CD8-positive, alpha-beta T cell (primary cell): ENCODE measurements at regions of chr1 and their contacts with region 1.

Region 1: GRCh38 chr1:32817159-32817814 is at the starts of genes S100PBP and YARS1:
- DNase-seq: peak; percentile 98 to 100 (median 100)
- ATAC-seq: peak; percentile 95
- H3K4me3 ChIP-seq: peak within 1 kb of the TSS; percentile 86 to 98
- H3K4me3 Mint-ChIP-seq: peak within 1 kb of the TSS; percentile 96
- H3K27ac ChIP-seq: peak within 1 kb of the TSS; percentile 76 to 84
- H3K27ac Mint-ChIP-seq: peak within 1 kb of the TSS; percentile 90
- H3K4me1 ChIP-seq: peaks cover 34% of the 10 kb centered on the region
- H3K4me1 Mint-ChIP-seq: peaks cover 63% of the 10 kb centered on the region
- H3K27me3 ChIP-seq: no peaks in the 10 kb centered on the region
- H3K27me3 Mint-ChIP-seq: no peaks in the 10 kb centered on the region
- CTCF ChIP-seq: no peak
- total RNA-seq, gene S100PBP: 21.2 to 26.6 TPM
- total RNA-seq, gene YARS1: 105 to 114 TPM

Region 2: DNA sequence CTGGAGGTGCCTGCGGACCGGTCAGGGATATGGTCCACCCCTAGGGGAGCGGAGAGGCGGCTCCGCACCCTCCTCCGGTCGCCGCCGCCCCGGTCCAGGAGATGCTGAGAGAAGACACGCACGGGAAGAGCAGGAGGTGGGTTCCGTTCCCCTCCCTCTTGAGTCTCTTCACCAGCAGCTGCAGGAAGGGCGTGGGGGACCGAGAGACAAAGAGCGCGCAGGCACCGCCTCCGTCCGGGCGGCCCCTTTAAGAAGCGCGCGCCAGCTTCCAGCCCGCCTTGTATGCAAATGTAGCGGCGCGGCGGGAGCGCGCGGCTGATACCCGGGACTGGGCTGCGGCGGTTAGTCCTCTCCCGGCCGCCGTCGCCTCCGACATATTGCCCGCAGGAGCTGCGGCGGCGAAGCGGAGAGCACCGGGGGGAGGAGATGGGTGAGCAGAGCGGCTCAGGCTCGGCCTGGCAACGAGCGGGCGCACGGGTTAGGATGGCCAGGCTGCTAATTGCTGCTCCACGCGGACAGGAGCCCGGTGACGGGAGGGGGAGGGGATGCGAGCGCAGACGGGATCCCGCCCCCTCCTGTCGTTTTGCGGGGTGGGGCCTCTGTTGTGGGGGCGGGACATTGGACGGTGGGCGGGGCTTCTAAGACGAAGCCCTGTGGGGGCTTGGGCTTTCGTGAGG is 744.5 kb before region 1 on chr1 and contains the start of gene TMEM39B:
- CTCF ChIA-PET with region 1: no interaction called
- POLR2A ChIA-PET with region 1: no interaction called
- intact Hi-C with region 1: loop called in 1 of 2 experiments (anchors 5 kb)
- DNase-seq: peak; percentile 85 to 97 (median 92)
- ATAC-seq: peak; percentile 86
- H3K4me3 ChIP-seq: peak within 1 kb of the TSS; percentile 75 to 99
- H3K4me3 Mint-ChIP-seq: peak within 1 kb of the TSS; percentile 82
- H3K27ac ChIP-seq: peak within 1 kb of the TSS; percentile 65 to 74
- H3K27ac Mint-ChIP-seq: peak within 1 kb of the TSS; percentile 86
- H3K4me1 ChIP-seq: peaks cover 18% of the 10 kb centered on the region
- H3K4me1 Mint-ChIP-seq: peaks cover 32% of the 10 kb centered on the region
- H3K27me3 ChIP-seq: no peaks in the 10 kb centered on the region
- H3K27me3 Mint-ChIP-seq: no peaks in the 10 kb centered on the region
- CTCF ChIP-seq: no peak
- total RNA-seq, gene TMEM39B: 6.6 to 7.6 TPM

Region 3: DNA sequence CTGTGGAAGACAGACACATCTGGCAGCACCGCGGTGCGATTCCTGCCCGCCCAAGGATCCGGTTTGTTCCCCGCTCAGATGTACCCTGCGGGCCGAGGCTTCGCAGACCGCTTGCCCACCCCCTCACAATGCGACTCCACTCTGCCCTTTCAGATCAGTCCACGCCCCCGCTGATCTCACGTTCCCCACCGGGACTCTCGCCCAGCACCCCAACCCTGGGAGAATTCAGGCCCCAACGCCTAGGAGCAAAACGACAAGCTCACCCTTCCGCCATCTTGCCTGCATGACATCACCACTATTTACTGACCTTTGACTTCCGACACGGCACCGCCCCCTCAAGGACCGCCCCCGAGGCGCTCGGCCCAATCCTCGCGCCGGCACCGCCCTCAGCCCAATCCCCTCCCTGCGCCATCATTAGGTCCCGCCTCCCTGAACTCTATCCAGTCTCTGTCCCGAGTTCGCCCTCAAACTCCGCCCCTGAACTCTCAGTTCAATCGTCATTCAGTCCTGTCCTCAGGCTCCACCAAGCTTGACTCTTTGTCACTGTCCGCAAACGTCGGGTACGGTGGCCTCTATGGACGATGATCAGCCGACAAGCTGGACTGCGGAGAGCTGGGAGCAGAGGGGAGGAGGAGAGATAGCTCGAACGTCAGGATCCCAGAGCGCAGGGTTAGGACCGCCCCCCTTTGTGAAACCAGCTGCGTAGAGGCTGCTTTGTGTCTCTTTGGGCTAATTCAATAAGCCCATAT is 423.0 kb before region 1 on chr1 and contains the start of gene BSDC1:
- CTCF ChIA-PET with region 1: no interaction called
- POLR2A ChIA-PET with region 1: no interaction called
- intact Hi-C with region 1: loop called in 1 of 2 experiments (anchors 2 kb)
- DNase-seq: peak; percentile 97 to 99 (median 98)
- ATAC-seq: peak; percentile 98
- H3K4me3 ChIP-seq: peak within 1 kb of the TSS; percentile 75 to 92
- H3K4me3 Mint-ChIP-seq: peak within 1 kb of the TSS; percentile 99
- H3K27ac ChIP-seq: peak within 1 kb of the TSS; percentile 86 to 98
- H3K27ac Mint-ChIP-seq: peak within 1 kb of the TSS; percentile 100
- H3K4me1 ChIP-seq: peaks cover 11% of the 10 kb centered on the region
- H3K4me1 Mint-ChIP-seq: peaks cover 31% of the 10 kb centered on the region
- H3K27me3 ChIP-seq: no peaks in the 10 kb centered on the region
- H3K27me3 Mint-ChIP-seq: no peaks in the 10 kb centered on the region
- CTCF ChIP-seq: no peak
- total RNA-seq, gene BSDC1: 189 to 201 TPM

Region 4: GRCh38 chr1:32753532-32754312 is 63.6 kb before region 1 on chr1:
- CTCF ChIA-PET with region 1: no interaction called
- POLR2A ChIA-PET with region 1: no interaction called
- intact Hi-C with region 1: loop called (anchors 1 to 2 kb)
- DNase-seq: peak; percentile 41 to 87 (median 68)
- ATAC-seq: peak; percentile 77
- H3K4me3 ChIP-seq: peak overlapping the region; percentile 48 to 76
- H3K4me3 Mint-ChIP-seq: peak overlapping the region; percentile 87
- H3K27ac ChIP-seq: no peak overlapping the region
- H3K27ac Mint-ChIP-seq: peak overlapping the region; percentile 4
- H3K4me1 ChIP-seq: peaks cover 6% of the 10 kb centered on the region
- H3K4me1 Mint-ChIP-seq: peaks cover 11% of the 10 kb centered on the region
- H3K27me3 ChIP-seq: no peaks in the 10 kb centered on the region
- H3K27me3 Mint-ChIP-seq: peaks cover 2% of the 10 kb centered on the region
- CTCF ChIP-seq: no peak

Region 5: GRCh38 chr1:32981003-32981901 is 164.0 kb after region 1 on chr1:
- CTCF ChIA-PET with region 1: no interaction called
- POLR2A ChIA-PET with region 1: no interaction called
- intact Hi-C with region 1: loop called in 1 of 2 experiments (anchors 2 kb)
- DNase-seq: peak; percentile 23 to 90 (median 64)
- ATAC-seq: peak; percentile 98
- H3K4me3 ChIP-seq: peak overlapping the region; percentile 40
- H3K4me3 Mint-ChIP-seq: peak overlapping the region; percentile 68
- H3K27ac ChIP-seq: peak overlapping the region; percentile 49 to 94
- H3K27ac Mint-ChIP-seq: peak overlapping the region; percentile 90
- H3K4me1 ChIP-seq: peaks cover 18% of the 10 kb centered on the region
- H3K4me1 Mint-ChIP-seq: peaks cover 29% of the 10 kb centered on the region
- H3K27me3 ChIP-seq: no peaks in the 10 kb centered on the region
- H3K27me3 Mint-ChIP-seq: no peaks in the 10 kb centered on the region
- CTCF ChIP-seq: no peak

Region 6: GRCh38 chr1:33181921-33182341 is 364.6 kb after region 1 on chr1 and contains the start of gene TRIM62:
- CTCF ChIA-PET with region 1: no interaction called
- POLR2A ChIA-PET with region 1: no interaction called
- intact Hi-C with region 1: loop called in 1 of 2 experiments (anchors 5 kb)
- DNase-seq: peak; percentile 48 to 88 (median 74)
- ATAC-seq: peak; percentile 74
- H3K4me3 ChIP-seq: peak within 1 kb of the TSS; percentile 82 to 85
- H3K4me3 Mint-ChIP-seq: peak within 1 kb of the TSS; percentile 88
- H3K27ac ChIP-seq: peak within 1 kb of the TSS in 1 of 2 experiments; percentile 36
- H3K27ac Mint-ChIP-seq: peak within 1 kb of the TSS; percentile 74
- H3K4me1 ChIP-seq: peaks cover 22% of the 10 kb centered on the region
- H3K4me1 Mint-ChIP-seq: peaks cover 31% of the 10 kb centered on the region
- H3K27me3 ChIP-seq: no peaks in the 10 kb centered on the region
- H3K27me3 Mint-ChIP-seq: peaks cover 6% of the 10 kb centered on the region
- CTCF ChIP-seq: no peak
- total RNA-seq, gene TRIM62: 14.3 to 14.8 TPM

Region 7: DNA sequence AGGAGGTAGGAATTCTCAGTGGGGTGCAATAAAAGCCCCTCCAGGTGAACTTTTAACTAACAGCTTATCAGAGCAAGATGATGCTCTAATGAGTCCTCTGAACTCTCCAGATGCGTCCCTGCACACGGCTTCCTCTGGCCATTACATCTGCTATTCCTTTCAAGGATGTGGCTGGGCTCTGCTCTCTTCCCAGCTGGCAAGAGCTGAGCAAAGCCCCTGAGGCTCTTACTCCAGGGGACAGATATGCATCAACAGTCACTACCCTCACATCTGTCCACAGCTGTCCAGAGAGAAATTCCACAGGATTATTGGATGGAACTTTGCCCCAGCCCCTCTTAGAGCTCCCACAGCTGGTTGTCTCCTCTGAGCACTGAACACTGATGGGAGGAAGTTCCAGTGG is 1627.2 kb after region 1 on chr1:
- CTCF ChIA-PET with region 1: no interaction called
- POLR2A ChIA-PET with region 1: no interaction called
- intact Hi-C with region 1: no loop called
- DNase-seq: no peak
- ATAC-seq: no peak
- H3K4me3 ChIP-seq: no peak overlapping the region
- H3K4me3 Mint-ChIP-seq: no peak overlapping the region
- H3K27ac ChIP-seq: no peak overlapping the region
- H3K27ac Mint-ChIP-seq: no peak overlapping the region
- H3K4me1 ChIP-seq: no peaks in the 10 kb centered on the region
- H3K4me1 Mint-ChIP-seq: no peaks in the 10 kb centered on the region
- H3K27me3 ChIP-seq: no peaks in the 10 kb centered on the region
- H3K27me3 Mint-ChIP-seq: peaks cover 18% of the 10 kb centered on the region
- CTCF ChIP-seq: no peak